GM12878 (cell line): ENCODE measurements at regions of chr13 and their contacts with region 1.

Region 1: DNA sequence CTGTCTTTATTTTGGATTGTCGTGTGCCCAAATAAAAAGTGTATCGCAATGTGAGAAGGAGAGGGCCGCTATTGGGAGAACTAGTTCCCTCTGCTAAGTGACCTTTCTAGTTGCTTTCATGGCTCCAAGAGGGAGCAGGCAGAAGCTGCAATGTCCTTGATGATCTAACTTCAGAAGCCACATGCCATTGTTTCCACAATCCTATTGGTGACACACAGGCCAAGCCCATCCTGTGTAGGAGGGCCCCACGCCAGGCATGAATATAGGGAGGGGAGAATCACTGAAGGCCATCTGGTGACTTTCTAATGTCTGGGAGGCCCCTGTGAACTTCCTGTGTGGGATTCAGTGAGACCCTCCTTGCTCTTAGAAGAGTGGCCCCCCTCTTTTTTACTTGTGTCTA is 47.8 kb upstream of the KPNA3 start:
- DNase-seq: no peak
- ATAC-seq: no peak
- H3K4me3 ChIP-seq: no peak overlapping the region
- H3K27ac ChIP-seq: no peak overlapping the region
- H3K4me1 ChIP-seq: no peaks in the 10 kb centered on the region
- H3K27me3 ChIP-seq: no peaks in the 10 kb centered on the region
- CTCF ChIP-seq: no peak
- EP300 ChIP-seq: no peak
- POLR2A ChIP-seq: no peak
- RAD21 ChIP-seq: no peak

Region 2: DNA sequence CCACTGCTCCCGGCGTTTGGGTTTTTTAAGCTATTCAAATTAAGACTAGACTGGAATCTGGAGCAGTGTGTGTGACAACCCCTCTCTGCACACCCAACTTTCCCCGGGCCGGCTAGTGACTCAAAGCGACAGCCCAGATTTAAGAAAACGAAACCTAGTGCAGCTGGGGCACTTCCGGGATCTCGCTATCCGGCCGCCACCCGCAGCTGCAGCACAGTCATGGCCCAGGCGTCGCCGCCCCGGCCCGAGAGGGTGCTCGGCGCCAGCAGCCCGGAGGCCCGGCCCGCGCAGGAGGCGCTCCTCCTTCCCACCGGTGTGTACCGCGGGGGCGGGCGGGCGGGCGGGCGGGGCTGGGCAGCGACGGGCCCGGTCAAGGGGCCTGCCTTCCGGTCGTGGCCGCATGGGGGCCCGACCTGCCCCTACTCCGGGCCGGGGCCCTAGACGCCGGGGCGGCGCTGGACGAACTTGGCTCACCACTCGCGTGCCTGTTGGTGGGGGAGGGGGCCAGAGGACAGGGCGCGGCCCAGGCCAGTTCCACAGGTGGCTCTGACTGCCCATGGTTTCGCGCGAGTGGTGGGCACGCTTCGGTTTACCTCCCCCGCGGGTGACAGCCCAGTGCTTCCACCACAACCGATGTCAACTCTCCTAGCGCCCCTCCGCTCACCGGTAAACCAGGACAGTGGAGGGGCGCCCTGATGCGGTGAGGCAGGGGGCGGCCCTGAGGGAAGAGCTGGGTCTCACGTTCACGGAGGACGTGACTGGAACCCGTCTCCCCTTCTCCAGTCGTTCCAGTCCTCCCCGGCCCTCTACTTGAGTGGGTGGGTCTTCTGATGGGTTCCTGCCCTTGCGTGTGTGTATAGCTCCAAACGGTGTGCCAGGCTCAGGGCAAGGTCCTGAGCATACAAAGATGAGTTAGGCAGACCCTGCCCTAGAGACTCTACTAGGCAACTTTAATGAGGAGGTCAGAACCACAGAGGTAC is 344.2 kb before region 1 on chr13 and contains the start of gene PHF11:
- CTCF ChIA-PET with region 1: no interaction called
- POLR2A ChIA-PET with region 1: no interaction called
- RAD21 ChIA-PET with region 1: no interaction called
- SMC1A ChIA-PET with region 1: no interaction called
- in situ Hi-C with region 1: no loop called
- intact Hi-C with region 1: no loop called
- DNase-seq: peak; percentile 65
- ATAC-seq: peak; percentile 86
- H3K4me3 ChIP-seq: peak within 1 kb of the TSS; percentile 78
- H3K27ac ChIP-seq: peak within 1 kb of the TSS; percentile 94
- H3K4me1 ChIP-seq: peaks cover 6% of the 10 kb centered on the region
- H3K27me3 ChIP-seq: no peaks in the 10 kb centered on the region
- CTCF ChIP-seq: no peak
- EP300 ChIP-seq: no peak
- POLR2A ChIP-seq: peak; percentile 88
- RAD21 ChIP-seq: no peak
- polyA plus RNA-seq, gene PHF11: 16.9 to 23.0 TPM

Region 3: DNA sequence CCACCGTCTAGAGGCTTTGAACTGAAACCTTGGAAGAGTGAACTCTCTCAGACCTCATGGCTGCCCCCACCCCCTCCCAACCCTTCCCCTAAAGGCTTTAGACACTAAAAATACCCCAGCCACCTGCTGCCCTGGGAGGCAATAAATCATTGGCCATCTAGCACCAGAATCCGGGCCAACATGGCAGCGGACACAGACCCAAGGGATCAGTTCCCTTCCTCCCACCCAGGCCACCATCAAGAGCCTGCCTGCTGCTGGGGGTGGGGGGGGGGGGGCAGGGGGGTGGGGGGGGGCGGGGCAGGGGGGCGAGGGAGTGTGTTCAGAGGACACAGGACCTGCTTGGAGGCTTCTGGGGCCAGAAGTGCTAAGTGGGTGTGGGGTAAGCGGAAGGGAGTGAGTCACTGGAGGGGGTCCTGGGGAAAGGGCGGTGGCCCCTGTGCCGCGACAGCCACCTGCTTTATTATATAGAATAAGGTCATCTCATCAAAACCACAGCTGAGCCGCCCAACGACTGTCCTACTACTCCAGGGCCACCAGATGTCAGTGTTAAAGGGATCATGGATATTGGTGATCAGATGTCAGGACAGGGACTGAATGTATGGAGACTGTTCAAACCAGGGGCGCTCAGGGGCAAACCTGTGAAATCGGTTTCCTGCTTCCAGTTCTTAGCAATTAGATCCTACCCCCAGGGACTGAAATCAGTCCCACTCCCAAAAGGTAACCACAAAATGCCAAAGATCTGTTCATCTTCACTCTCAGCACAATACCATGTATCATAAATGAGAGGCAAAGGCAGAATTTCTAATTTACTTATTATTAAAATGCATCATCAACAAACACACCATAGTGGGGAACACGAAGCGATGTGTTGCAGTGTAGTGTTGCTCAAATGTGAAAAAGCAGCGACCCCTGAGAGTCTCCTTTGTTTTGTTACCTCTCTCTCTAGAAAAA is 187.6 kb before region 1 on chr13:
- CTCF ChIA-PET with region 1: no interaction called
- POLR2A ChIA-PET with region 1: no interaction called
- RAD21 ChIA-PET with region 1: no interaction called
- SMC1A ChIA-PET with region 1: no interaction called
- in situ Hi-C with region 1: no loop called
- intact Hi-C with region 1: loop called (anchors 5 kb)
- DNase-seq: no peak
- ATAC-seq: peak; percentile 64
- H3K4me3 ChIP-seq: no peak overlapping the region
- H3K27ac ChIP-seq: no peak overlapping the region
- H3K4me1 ChIP-seq: no peaks in the 10 kb centered on the region
- H3K27me3 ChIP-seq: no peaks in the 10 kb centered on the region
- CTCF ChIP-seq: peak; percentile 29 to 37 (median 33); a peak in 4 of 6 replicates
- EP300 ChIP-seq: no peak
- POLR2A ChIP-seq: no peak
- RAD21 ChIP-seq: peak; percentile 48

Region 4: GRCh38 chr13:49669735-49670309 is 170.4 kb before region 1 on chr13:
- CTCF ChIA-PET with region 1: interaction called, 16 read pairs
- POLR2A ChIA-PET with region 1: no interaction called
- RAD21 ChIA-PET with region 1: interaction called, 4 read pairs
- SMC1A ChIA-PET with region 1: interaction called, 7 read pairs
- in situ Hi-C with region 1: loop called (anchors 5 kb)
- intact Hi-C with region 1: no loop called
- DNase-seq: no peak
- ATAC-seq: peak; percentile 99
- H3K4me3 ChIP-seq: no peak overlapping the region
- H3K27ac ChIP-seq: no peak overlapping the region
- H3K4me1 ChIP-seq: no peaks in the 10 kb centered on the region
- H3K27me3 ChIP-seq: no peaks in the 10 kb centered on the region
- CTCF ChIP-seq: peak; percentile 76 to 82 (median 79)
- EP300 ChIP-seq: no peak
- POLR2A ChIP-seq: no peak
- RAD21 ChIP-seq: peak; percentile 82